Activated B cell treated with CpG ODN at 0.5 μM for 24 hours (primary cell): ENCODE measurements at regions of chr6 and their contacts with region 1.

Region 1: GRCh38 chr6:107437691-107438090 is 21.7 kb downstream of the PDSS2 start:
- DNase-seq: no peak
- ATAC-seq: no peak
- H3K4me3 Mint-ChIP-seq: no peak overlapping the region
- H3K27ac Mint-ChIP-seq: no peak overlapping the region
- H3K4me1 Mint-ChIP-seq: peaks cover 4% of the 10 kb centered on the region
- H3K27me3 Mint-ChIP-seq: no peaks in the 10 kb centered on the region
- CTCF ChIP-seq: no peak

Region 2: DNA sequence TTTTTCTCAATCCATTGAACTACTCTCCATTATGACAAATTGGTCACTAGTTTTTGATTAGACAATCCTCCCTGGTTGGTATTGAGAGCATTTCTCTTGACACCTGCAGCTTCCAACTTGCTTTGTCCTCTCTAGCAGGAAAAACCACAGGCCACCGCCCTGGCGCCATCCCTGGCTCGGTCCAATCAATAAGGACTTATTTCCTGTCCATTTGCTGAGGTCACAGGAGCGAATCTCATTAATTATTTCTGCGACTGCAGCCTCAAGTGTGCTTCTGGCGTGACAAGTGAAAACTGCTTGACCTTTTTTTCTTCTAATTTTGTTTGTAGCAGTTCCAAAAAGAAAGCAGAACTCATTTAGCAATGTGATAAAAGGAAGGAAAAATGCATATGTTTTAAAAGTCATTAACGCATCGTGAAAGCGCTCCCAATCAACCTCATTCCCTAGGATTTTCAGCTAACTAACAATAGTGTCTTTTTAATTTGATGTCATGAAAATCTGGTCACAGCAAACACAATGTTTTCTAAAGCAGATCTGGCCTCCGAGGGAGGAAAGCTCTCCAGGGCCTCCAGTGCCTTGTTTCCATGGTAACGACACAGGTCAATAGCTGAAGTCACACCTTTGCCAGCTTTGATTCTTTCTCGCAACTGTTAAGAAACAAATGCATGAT is 283.4 kb before region 1 on chr6:
- CTCF ChIA-PET with region 1: no interaction called
- POLR2A ChIA-PET with region 1: interaction called, 13 read pairs
- intact Hi-C with region 1: no loop called
- DNase-seq: no peak
- ATAC-seq: no peak
- H3K4me3 Mint-ChIP-seq: no peak overlapping the region
- H3K27ac Mint-ChIP-seq: no peak overlapping the region
- H3K4me1 Mint-ChIP-seq: peaks cover 1% of the 10 kb centered on the region
- H3K27me3 Mint-ChIP-seq: no peaks in the 10 kb centered on the region
- CTCF ChIP-seq: no peak

Region 3: GRCh38 chr6:107413966-107414645 is 23.6 kb before region 1 on chr6:
- CTCF ChIA-PET with region 1: no interaction called
- POLR2A ChIA-PET with region 1: no interaction called
- intact Hi-C with region 1: no loop called
- DNase-seq: no peak
- ATAC-seq: no peak
- H3K4me3 Mint-ChIP-seq: no peak overlapping the region
- H3K27ac Mint-ChIP-seq: no peak overlapping the region
- H3K4me1 Mint-ChIP-seq: peaks cover 5% of the 10 kb centered on the region
- H3K27me3 Mint-ChIP-seq: no peaks in the 10 kb centered on the region
- CTCF ChIP-seq: no peak